ENCODE measurements at regions of chr13 and their contacts with region 1.

Region 1: GRCh38 chr13:30371649-30372265 is 50.5 kb upstream of the UBE2L5 start:
- DNase-seq: peak; percentile 96
- ATAC-seq: peak; percentile 74
- H3K4me3 ChIP-seq: peak overlapping the region; percentile 12; the same call in 1 of the 2 replicates
- H3K27ac ChIP-seq: peak overlapping the region; percentile 73
- H3K4me1 ChIP-seq: peaks cover 62% of the 10 kb centered on the region
- H3K27me3 ChIP-seq: no peaks in the 10 kb centered on the region
- CTCF ChIP-seq: peak in 1 of 3 experiments; percentile 6; a peak in 1 of 6 replicates
- EP300 ChIP-seq: peak; percentile 96 to 97
- POLR2A ChIP-seq: no peak
- RAD21 ChIP-seq: 0 out of 2 replicates have a peak, but pooled peaks have one; percentile 1

Region 2: DNA sequence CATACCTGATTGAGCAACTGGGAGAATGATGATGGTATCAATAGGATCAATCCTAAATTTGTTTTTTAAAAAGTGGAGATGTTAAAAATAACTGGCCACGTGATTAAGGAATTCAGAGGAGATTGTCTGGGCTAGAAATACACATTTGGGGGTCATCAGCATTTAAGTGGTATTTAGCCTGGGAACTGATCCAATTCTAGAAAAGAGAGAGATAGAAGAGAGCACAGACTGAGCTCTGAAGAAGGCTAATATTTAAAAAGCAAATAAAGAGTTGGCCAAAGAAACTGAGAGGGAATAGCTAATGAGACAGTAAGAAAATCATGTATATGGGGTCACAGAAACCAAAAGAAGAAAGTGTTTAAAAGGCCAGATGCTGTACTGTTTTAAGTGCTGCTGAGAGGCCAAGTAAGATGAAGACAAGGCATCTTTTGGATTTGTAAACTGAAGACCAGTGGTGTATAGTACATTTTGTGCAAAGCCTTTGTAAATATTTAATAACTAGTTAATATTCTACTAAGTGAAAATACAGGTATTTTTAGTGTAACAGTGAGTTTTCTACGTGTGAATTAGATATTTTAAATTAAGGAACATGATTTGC is 561.5 kb before region 1 on chr13:
- CTCF ChIA-PET with region 1: no interaction called
- POLR2A ChIA-PET with region 1: no interaction called
- RAD21 ChIA-PET with region 1: no interaction called
- SMC1A ChIA-PET with region 1: no interaction called
- in situ Hi-C with region 1: no loop called
- intact Hi-C with region 1: no loop called
- DNase-seq: no peak
- ATAC-seq: peak; percentile 48
- H3K4me3 ChIP-seq: no peak overlapping the region
- H3K27ac ChIP-seq: no peak overlapping the region
- H3K4me1 ChIP-seq: peaks cover 11% of the 10 kb centered on the region; the same call in 1 of the 2 replicates
- H3K27me3 ChIP-seq: no peaks in the 10 kb centered on the region
- CTCF ChIP-seq: no peak
- EP300 ChIP-seq: no peak
- POLR2A ChIP-seq: no peak
- RAD21 ChIP-seq: no peak

Region 3: DNA sequence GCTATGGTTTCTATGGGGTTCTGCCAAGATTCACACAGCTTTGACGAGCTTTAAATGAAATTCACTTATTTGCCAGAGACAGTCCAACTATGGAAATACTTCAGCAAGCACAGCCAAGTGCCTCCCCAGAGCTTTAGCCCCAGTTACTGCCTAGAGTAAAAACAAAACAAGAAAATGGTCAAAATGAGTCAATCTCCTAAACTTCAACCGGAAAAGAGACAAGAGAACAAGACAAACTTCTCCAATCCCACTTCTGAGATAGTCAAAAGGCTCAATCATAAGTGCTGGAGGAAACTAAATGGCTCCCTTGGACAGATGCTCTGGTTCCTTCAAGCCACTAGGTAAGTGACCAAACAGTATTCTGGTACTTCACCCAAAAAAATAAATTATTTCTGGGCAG is 130.2 kb before region 1 on chr13:
- CTCF ChIA-PET with region 1: no interaction called
- POLR2A ChIA-PET with region 1: no interaction called
- RAD21 ChIA-PET with region 1: no interaction called
- SMC1A ChIA-PET with region 1: no interaction called
- in situ Hi-C with region 1: no loop called
- intact Hi-C with region 1: no loop called
- DNase-seq: peak; percentile 56
- ATAC-seq: peak; percentile 93
- H3K4me3 ChIP-seq: no peak overlapping the region
- H3K27ac ChIP-seq: no peak overlapping the region
- H3K4me1 ChIP-seq: peaks cover 2% of the 10 kb centered on the region; the same call in 1 of the 2 replicates
- H3K27me3 ChIP-seq: no peaks in the 10 kb centered on the region
- CTCF ChIP-seq: no peak
- EP300 ChIP-seq: peak in 1 of 2 experiments; percentile 60; a peak in 1 of 4 replicates
- POLR2A ChIP-seq: no peak
- RAD21 ChIP-seq: no peak; the same call in 1 of the 2 replicates

Region 4: DNA sequence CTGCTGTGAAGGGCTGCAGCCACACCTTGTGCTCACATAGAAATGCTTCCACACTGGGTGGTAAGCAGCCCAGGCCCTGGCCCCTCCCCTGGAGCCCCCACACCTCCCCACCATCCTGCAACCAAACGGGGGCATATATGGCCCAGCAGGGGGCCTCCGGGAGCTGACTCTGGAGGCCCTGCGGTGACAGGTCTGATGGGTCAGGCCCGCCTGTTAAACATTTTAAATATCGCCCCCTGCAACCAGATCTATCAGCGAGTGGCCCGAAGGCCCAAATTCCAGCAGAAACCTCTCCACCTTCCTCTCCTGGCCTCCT is 16.4 kb before region 1 on chr13:
- CTCF ChIA-PET with region 1: interaction called, 4 read pairs
- POLR2A ChIA-PET with region 1: interaction called, 4 read pairs
- RAD21 ChIA-PET with region 1: interaction called, 3 read pairs
- SMC1A ChIA-PET with region 1: interaction called, 10 read pairs
- in situ Hi-C with region 1: no loop called
- intact Hi-C with region 1: no loop called
- DNase-seq: no peak
- ATAC-seq: peak; percentile 91
- H3K4me3 ChIP-seq: no peak overlapping the region
- H3K27ac ChIP-seq: no peak overlapping the region
- H3K4me1 ChIP-seq: no peaks in the 10 kb centered on the region
- H3K27me3 ChIP-seq: no peaks in the 10 kb centered on the region
- CTCF ChIP-seq: peak; percentile 39 to 65 (median 48)
- EP300 ChIP-seq: no peak
- POLR2A ChIP-seq: no peak
- RAD21 ChIP-seq: peak; percentile 75

Region 5: GRCh38 chr13:30395192-30396084 is 23.7 kb after region 1 on chr13:
- CTCF ChIA-PET with region 1: interaction called, 14 read pairs
- POLR2A ChIA-PET with region 1: interaction called, 76 read pairs
- RAD21 ChIA-PET with region 1: interaction called, 105 read pairs
- SMC1A ChIA-PET with region 1: interaction called, 143 read pairs
- in situ Hi-C with region 1: no loop called
- intact Hi-C with region 1: loop called (anchors 2 kb)
- DNase-seq: peak; percentile 60
- ATAC-seq: peak; percentile 85
- H3K4me3 ChIP-seq: peak overlapping the region; percentile 82
- H3K27ac ChIP-seq: peak overlapping the region; percentile 89
- H3K4me1 ChIP-seq: peaks cover 7% of the 10 kb centered on the region
- H3K27me3 ChIP-seq: no peaks in the 10 kb centered on the region
- CTCF ChIP-seq: no peak
- EP300 ChIP-seq: peak in 1 of 2 experiments; percentile 56; a peak in 1 of 4 replicates
- POLR2A ChIP-seq: peak; percentile 34
- RAD21 ChIP-seq: no peak

Region 6: GRCh38 chr13:30415430-30416030 is 43.8 kb after region 1 on chr13:
- CTCF ChIA-PET with region 1: interaction called, 3 read pairs
- POLR2A ChIA-PET with region 1: interaction called, 3 read pairs
- RAD21 ChIA-PET with region 1: interaction called, 8 read pairs
- SMC1A ChIA-PET with region 1: interaction called, 27 read pairs
- in situ Hi-C with region 1: no loop called
- intact Hi-C with region 1: no loop called
- DNase-seq: no peak
- ATAC-seq: peak; percentile 91
- H3K4me3 ChIP-seq: no peak overlapping the region; the same call in 1 of the 2 replicates
- H3K27ac ChIP-seq: no peak overlapping the region
- H3K4me1 ChIP-seq: peaks cover 15% of the 10 kb centered on the region; the same call in 1 of the 2 replicates
- H3K27me3 ChIP-seq: no peaks in the 10 kb centered on the region
- CTCF ChIP-seq: no peak
- EP300 ChIP-seq: no peak
- POLR2A ChIP-seq: no peak
- RAD21 ChIP-seq: no peak

Region 7: GRCh38 chr13:30429721-30430694 is 58.3 kb after region 1 on chr13:
- CTCF ChIA-PET with region 1: interaction called, 3 read pairs
- POLR2A ChIA-PET with region 1: no interaction called
- RAD21 ChIA-PET with region 1: interaction called, 13 read pairs
- SMC1A ChIA-PET with region 1: interaction called, 6 read pairs
- in situ Hi-C with region 1: no loop called
- intact Hi-C with region 1: no loop called
- DNase-seq: peak; percentile 59
- ATAC-seq: peak; percentile 82
- H3K4me3 ChIP-seq: peak overlapping the region; percentile 29
- H3K27ac ChIP-seq: peak overlapping the region; percentile 50
- H3K4me1 ChIP-seq: peaks cover 28% of the 10 kb centered on the region
- H3K27me3 ChIP-seq: no peaks in the 10 kb centered on the region
- CTCF ChIP-seq: no peak
- EP300 ChIP-seq: peak; percentile 54 to 69; a peak in 2 of 4 replicates
- POLR2A ChIP-seq: no peak
- RAD21 ChIP-seq: 0 out of 2 replicates have a peak, but pooled peaks have one; percentile 1

Region 8: GRCh38 chr13:30617315-30618185 is 245.8 kb after region 1 on chr13 and contains the start of gene USPL1:
- CTCF ChIA-PET with region 1: no interaction called
- POLR2A ChIA-PET with region 1: interaction called, 3 read pairs
- RAD21 ChIA-PET with region 1: interaction called, 5 read pairs
- SMC1A ChIA-PET with region 1: interaction called, 4 read pairs
- in situ Hi-C with region 1: no loop called
- intact Hi-C with region 1: loop called (anchors 5 kb)
- DNase-seq: peak; percentile 96
- ATAC-seq: peak; percentile 91
- H3K4me3 ChIP-seq: peak within 1 kb of the TSS; percentile 91
- H3K27ac ChIP-seq: peak within 1 kb of the TSS; percentile 93
- H3K4me1 ChIP-seq: peaks cover 8% of the 10 kb centered on the region
- H3K27me3 ChIP-seq: no peaks in the 10 kb centered on the region
- CTCF ChIP-seq: peak in 1 of 3 experiments; percentile 6; a peak in 1 of 6 replicates
- EP300 ChIP-seq: peak; percentile 84 to 95
- POLR2A ChIP-seq: peak; percentile 93
- RAD21 ChIP-seq: peak; percentile 17; the same call in 1 of the 2 replicates
- polyA plus RNA-seq, gene USPL1: 7.9 to 8.0 TPM

Measured in GM12878 (cell line).